Sigmoid colon (tissue), 7 donors: ENCODE measurements at regions of chr1 and their contacts with region 1.

Region 1: GRCh38 chr1:36269408-36269838 is 36.7 kb upstream of the SH3D21 start:
- DNase-seq: no peak
- H3K4me3 ChIP-seq: no peak overlapping the region
- H3K27ac ChIP-seq: no peak overlapping the region
- H3K4me1 ChIP-seq: peaks cover 0 to 25% (median 19%) of the 10 kb centered on the region in 4 donors
- H3K27me3 ChIP-seq: no peaks in the 10 kb centered on the region
- CTCF ChIP-seq: no peak
- EP300 ChIP-seq: no peak
- POLR2A ChIP-seq: no peak

Region 2: DNA sequence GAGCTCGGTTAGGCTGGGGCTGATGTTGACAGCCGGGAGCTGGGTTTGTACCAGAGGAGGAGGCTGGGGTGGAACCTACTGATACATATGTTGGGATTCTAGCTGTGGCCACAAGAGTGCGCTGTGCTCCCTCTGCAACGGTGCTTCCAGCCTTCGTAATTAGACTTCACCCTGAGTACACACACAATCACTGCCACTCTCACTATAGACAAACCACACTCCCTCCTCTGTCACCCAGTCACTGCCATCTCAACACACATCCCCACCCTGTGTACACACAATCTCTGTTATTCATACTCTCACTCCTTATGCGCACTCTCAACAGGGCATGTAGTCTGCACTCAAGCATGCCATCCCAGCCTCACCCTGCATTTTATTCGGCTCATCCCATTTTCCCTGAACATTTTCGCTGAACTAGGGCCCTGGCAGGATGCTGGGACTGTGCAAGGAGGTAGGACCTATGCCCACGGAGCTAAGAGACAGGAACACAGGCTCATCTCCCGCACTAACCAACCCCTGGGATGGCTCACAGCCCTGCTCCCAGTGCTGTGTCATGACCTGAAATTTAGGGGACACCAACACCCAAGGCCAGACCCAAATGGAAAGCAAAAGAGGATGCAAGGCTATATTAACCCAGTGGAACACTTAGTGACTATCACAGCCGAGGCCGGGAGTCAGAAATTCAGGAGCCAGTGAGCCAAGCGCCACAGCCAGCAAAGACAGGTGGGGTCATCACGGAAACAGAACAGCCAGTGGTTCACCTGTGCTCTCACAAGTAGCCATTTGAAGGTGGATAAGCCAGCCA is 1482.7 kb before region 1 on chr1:
- intact Hi-C with region 1: no loop called
- DNase-seq: peak; percentile 68
- H3K4me3 ChIP-seq: no peak overlapping the region
- H3K27ac ChIP-seq: no peak overlapping the region
- H3K4me1 ChIP-seq: peaks cover 0 to 2% (median 2%) of the 10 kb centered on the region in 4 donors
- H3K27me3 ChIP-seq: peaks cover 16 to 26% (median 17%) of the 10 kb centered on the region in 3 donors
- CTCF ChIP-seq: peak in 3 of 4 experiments; percentile 54 to 78 (median 62)
- EP300 ChIP-seq: no peak
- POLR2A ChIP-seq: no peak

Region 3: DNA sequence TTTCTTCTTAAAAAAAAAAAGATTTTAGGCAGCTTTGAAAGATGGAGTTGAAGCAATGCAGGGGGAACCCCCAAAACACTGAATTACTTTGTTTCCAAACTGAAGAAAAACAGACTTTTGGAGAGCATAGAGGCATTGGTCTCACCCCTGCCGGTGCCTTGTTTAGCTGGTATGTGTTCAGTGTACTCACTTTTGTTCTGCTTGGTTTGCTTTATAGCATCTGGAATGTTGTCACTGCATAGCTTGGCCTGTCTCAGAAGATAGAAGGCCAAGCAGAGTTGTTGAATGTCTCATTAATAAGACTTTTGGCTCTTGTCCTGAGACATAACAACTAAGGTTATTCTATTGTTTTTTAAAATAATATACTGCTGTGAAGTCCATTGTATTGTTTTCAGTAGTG is 38.2 kb before region 1 on chr1:
- intact Hi-C with region 1: loop called (anchors 5 kb)
- DNase-seq: no peak
- H3K4me3 ChIP-seq: no peak overlapping the region
- H3K27ac ChIP-seq: peak overlapping the region in 3 of 4 donors; percentile 26 to 39 (median 30)
- H3K4me1 ChIP-seq: peaks cover 0 to 78% (median 69%) of the 10 kb centered on the region in 4 donors
- H3K27me3 ChIP-seq: no peaks in the 10 kb centered on the region
- CTCF ChIP-seq: no peak
- EP300 ChIP-seq: no peak
- POLR2A ChIP-seq: no peak